ENCODE measurements at regions of chr7 and their contacts with region 1.

Region 1: DNA sequence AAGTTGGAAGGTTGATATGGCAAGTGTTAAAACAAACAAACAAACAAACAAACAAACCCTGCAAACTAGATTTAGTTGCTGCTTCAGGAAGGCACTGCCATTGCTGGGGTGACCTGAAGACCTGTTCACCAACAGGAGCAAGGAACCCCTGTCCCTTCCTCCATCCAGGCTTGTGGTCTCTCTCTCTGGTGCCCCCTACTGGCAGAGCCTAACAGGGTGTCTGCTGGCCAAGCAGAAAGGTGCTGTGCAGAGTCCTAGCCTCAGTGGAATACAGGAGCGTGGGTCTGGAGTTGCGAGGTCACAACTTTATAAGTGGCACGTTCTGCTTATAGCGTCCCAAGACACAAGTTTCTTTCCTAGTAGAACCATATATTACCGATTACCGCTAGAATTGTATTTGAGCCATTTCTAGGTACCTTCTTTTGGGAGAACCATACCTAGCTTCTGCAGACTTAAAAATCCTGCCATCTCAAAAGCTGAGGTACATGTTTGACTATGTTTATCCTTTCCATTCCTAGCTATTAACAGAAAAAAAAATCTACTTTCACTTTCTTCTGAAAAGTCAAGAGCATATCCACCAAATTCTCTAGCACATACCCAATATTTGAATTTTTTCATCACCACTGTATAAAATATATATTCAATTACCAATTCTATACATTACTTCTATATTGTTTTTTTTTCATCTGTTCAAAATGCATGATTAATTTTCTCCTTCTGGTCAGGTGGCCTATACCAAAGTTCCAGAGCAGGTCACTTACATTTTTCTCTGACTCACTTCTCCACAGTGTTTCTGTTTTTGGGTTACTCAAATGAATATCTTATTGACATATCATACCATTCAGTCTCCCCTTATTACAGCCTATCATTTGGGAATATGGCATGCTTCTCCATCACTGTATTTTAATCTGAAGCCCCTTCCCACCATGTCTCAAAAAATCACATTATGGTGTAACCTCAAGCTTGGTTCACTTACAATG is 29.1 kb upstream of the CALD1 start:
- DNase-seq: peak; percentile 84
- ATAC-seq: peak; percentile 87
- H3K4me3 Mint-ChIP-seq: no peak overlapping the region
- H3K27ac Mint-ChIP-seq: no peak overlapping the region
- H3K4me1 Mint-ChIP-seq: peaks cover 17% of the 10 kb centered on the region
- H3K27me3 Mint-ChIP-seq: no peaks in the 10 kb centered on the region

Region 2: GRCh38 chr7:133936074-133936473 is 814.3 kb before region 1 on chr7:
- CTCF ChIA-PET with region 1: no interaction called
- POLR2A ChIA-PET with region 1: no interaction called
- intact Hi-C with region 1: no loop called
- DNase-seq: no peak
- ATAC-seq: no peak
- H3K4me3 Mint-ChIP-seq: no peak overlapping the region
- H3K27ac Mint-ChIP-seq: no peak overlapping the region
- H3K4me1 Mint-ChIP-seq: no peaks in the 10 kb centered on the region
- H3K27me3 Mint-ChIP-seq: no peaks in the 10 kb centered on the region

Region 3: DNA sequence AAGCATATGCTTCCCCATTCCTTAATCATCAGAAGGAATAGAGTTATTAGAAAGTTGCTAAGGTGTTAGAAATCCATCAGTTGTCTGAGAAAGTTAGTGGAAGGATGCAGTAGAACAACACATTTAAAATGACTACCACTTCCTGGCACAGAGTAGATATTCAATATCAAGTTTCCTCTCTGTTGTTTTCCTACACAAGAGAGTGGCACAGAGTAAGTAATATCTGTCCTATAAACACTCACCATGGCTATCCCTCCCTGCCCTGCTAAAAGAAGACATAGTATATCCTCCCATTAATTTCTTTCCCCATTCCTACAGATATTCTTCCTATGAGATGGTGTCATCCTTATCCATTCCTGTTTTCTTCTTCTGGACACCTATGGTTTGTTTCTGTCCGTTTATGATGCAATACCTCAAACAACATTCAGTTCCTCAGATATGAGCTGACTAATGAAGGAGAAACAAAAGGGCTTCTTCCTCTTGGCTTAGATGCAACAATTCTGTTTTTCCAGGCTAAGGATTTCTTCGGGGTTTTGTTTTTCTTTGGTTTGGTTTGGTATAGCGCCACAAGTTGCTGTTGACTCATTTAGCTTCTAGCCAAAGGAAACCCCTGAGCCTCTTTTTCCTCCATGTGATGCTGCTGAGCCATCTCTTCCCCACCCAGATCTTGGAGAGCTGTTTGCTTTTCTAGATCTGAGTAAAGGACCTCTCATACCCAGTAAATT is 136.6 kb before region 1 on chr7:
- CTCF ChIA-PET with region 1: interaction called, 3 read pairs
- POLR2A ChIA-PET with region 1: no interaction called
- intact Hi-C with region 1: loop called (anchors 5 kb)
- DNase-seq: peak; percentile 62
- ATAC-seq: peak; percentile 87
- H3K4me3 Mint-ChIP-seq: no peak overlapping the region
- H3K27ac Mint-ChIP-seq: peak overlapping the region; percentile 63
- H3K4me1 Mint-ChIP-seq: peaks cover 12% of the 10 kb centered on the region
- H3K27me3 Mint-ChIP-seq: peaks cover 29% of the 10 kb centered on the region

Region 4: GRCh38 chr7:134690016-134690415 is 60.4 kb before region 1 on chr7:
- CTCF ChIA-PET with region 1: interaction called, 14 read pairs
- POLR2A ChIA-PET with region 1: no interaction called
- intact Hi-C with region 1: loop called (anchors 1 to 2 kb)
- DNase-seq: no peak
- ATAC-seq: peak; percentile 37
- H3K4me3 Mint-ChIP-seq: no peak overlapping the region
- H3K27ac Mint-ChIP-seq: peak overlapping the region; percentile 62
- H3K4me1 Mint-ChIP-seq: peaks cover 17% of the 10 kb centered on the region
- H3K27me3 Mint-ChIP-seq: peaks cover 2% of the 10 kb centered on the region

Region 5: DNA sequence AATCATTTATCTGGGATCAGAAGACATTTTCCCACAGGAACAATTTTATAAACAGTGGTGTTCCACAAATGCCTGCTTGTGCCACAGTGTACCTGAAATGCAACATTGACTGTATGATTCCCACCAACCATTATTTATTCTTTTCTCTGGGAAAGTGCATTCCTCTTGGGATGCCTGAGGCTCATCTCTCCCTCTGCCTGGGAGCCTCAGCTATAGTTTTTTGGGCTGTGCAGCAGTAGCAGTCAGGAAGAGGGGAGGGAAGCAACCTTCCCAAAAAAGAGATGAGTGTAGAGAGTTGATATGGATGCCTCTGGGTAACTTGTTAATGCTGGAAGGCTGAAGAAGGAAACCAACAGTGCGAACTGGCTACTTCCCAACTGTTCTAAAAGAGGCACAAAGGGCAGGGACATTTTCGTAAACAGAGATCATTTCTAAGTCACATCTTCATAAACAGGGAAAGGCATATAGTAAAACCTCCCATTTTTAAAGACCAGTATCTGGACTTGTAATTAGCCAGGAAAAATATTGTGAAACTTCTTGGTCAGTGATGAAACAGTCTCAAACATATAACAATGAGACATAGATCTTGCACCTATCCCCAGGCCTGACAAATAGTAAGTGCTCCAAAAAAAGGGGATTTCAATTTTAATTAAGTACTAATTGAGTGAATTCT is 27.7 kb after region 1 on chr7:
- CTCF ChIA-PET with region 1: no interaction called
- POLR2A ChIA-PET with region 1: no interaction called
- intact Hi-C with region 1: no loop called
- DNase-seq: no peak
- ATAC-seq: no peak
- H3K4me3 Mint-ChIP-seq: no peak overlapping the region
- H3K27ac Mint-ChIP-seq: no peak overlapping the region
- H3K4me1 Mint-ChIP-seq: no peaks in the 10 kb centered on the region
- H3K27me3 Mint-ChIP-seq: no peaks in the 10 kb centered on the region

Region 6: GRCh38 chr7:134865001-134865845 is 114.8 kb after region 1 on chr7:
- CTCF ChIA-PET with region 1: no interaction called
- POLR2A ChIA-PET with region 1: no interaction called
- intact Hi-C with region 1: loop called in 1 of 2 experiments (anchors 5 kb)
- DNase-seq: peak; percentile 61
- ATAC-seq: peak; percentile 88
- H3K4me3 Mint-ChIP-seq: peak overlapping the region; percentile 55
- H3K27ac Mint-ChIP-seq: peak overlapping the region; percentile 68
- H3K4me1 Mint-ChIP-seq: peaks cover 25% of the 10 kb centered on the region
- H3K27me3 Mint-ChIP-seq: no peaks in the 10 kb centered on the region

Region 7: GRCh38 chr7:135558337-135558767 is 808.0 kb after region 1 on chr7:
- CTCF ChIA-PET with region 1: no interaction called
- POLR2A ChIA-PET with region 1: no interaction called
- intact Hi-C with region 1: no loop called
- DNase-seq: peak; percentile 78
- ATAC-seq: peak; percentile 73
- H3K4me3 Mint-ChIP-seq: no peak overlapping the region
- H3K27ac Mint-ChIP-seq: no peak overlapping the region
- H3K4me1 Mint-ChIP-seq: peaks cover 29% of the 10 kb centered on the region
- H3K27me3 Mint-ChIP-seq: no peaks in the 10 kb centered on the region